ENCODE measurements at regions of chr11 and their contacts with region 1.

Region 1: GRCh38 chr11:72430741-72431570 is 3.4 kb downstream of the CLPB start:
- DNase-seq: peak; percentile 63
- H3K4me3 Mint-ChIP-seq: no peak overlapping the region
- H3K27ac Mint-ChIP-seq: peak overlapping the region; percentile 50
- H3K4me1 Mint-ChIP-seq: peaks cover 60% of the 10 kb centered on the region
- H3K27me3 Mint-ChIP-seq: no peaks in the 10 kb centered on the region

Region 2: DNA sequence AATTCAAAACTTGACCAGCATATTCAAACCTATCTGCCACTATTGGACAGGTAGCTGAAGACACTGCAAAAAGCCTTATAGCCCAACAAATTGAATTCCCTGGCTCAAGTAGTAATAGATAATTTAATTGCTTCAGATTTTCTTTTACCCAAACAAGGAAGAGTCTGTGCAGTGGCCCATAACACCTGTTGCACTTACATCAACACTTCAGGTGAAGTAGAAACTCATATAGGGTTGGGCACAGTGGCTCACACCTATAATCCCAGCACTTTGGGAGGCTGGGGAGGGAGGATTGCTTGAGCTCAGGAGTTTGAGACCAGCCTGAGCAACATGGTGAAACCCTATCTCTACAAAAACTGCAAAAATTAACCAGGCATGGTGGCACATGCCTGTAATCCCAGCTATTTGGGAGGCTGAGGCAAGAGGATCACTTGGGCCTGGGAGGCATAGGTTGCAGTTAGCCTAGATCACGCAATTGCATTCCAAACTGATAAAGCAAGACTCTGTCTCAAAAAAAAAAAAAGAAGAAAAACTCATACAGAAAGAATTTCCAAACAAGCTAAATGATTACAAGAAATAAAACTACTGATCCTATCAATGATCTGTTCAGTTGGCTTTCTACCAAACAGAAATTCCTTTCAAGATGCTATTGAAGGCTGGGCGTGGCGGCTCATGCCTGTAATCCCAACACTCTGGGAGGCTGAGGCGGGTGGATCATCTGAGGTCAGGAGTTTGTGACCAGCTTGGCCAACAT is 286.0 kb before region 1 on chr11:
- CTCF ChIA-PET with region 1: interaction called, 10 read pairs
- DNase-seq: no peak
- H3K4me3 Mint-ChIP-seq: no peak overlapping the region
- H3K27ac Mint-ChIP-seq: no peak overlapping the region
- H3K4me1 Mint-ChIP-seq: no peaks in the 10 kb centered on the region
- H3K27me3 Mint-ChIP-seq: peaks cover 33% of the 10 kb centered on the region

Region 3: GRCh38 chr11:72238040-72238450 is 192.9 kb before region 1 on chr11:
- CTCF ChIA-PET with region 1: interaction called, 18 read pairs
- DNase-seq: peak; percentile 65
- H3K4me3 Mint-ChIP-seq: no peak overlapping the region
- H3K27ac Mint-ChIP-seq: no peak overlapping the region
- H3K4me1 Mint-ChIP-seq: peaks cover 15% of the 10 kb centered on the region
- H3K27me3 Mint-ChIP-seq: peaks cover 51% of the 10 kb centered on the region

Region 4: GRCh38 chr11:72328366-72329224 is 102.4 kb before region 1 on chr11:
- CTCF ChIA-PET with region 1: interaction called, 42 read pairs
- DNase-seq: no peak
- H3K4me3 Mint-ChIP-seq: no peak overlapping the region
- H3K27ac Mint-ChIP-seq: no peak overlapping the region
- H3K4me1 Mint-ChIP-seq: peaks cover 31% of the 10 kb centered on the region
- H3K27me3 Mint-ChIP-seq: no peaks in the 10 kb centered on the region

Region 5: DNA sequence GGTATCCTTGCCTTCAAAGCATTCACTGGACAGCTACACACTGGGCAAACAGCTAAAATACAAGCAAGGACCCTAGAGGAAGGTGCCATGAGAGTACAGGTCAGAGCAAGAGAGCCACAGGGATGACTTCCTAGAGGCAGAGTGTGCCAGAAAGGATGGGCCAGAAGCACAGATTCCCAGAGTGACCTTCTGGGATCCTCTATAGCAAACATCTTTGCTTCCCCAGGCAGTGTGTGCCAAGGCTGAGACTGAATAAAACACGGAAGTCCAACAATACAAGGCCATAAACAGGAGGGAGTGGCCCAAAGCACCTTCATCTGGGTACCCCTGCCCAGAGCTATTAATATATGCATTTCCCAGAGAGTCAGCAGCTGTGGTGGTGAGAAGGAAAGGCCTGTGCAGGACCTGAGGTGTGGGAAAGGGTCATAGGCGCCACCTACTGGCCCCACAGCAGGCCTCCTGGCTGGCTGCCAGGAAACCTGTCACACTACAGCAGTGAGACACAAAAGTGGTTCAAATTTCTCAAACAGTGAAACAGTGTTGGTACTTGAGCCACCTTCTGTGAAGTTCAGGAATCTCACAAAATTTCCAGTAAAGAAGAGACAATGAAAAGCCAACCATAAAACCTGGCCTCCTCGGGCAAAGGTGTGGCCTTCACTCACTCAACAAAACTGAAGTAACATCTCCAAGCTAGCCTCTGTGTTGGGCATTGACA is 16.9 kb before region 1 on chr11:
- CTCF ChIA-PET with region 1: interaction called, 190 read pairs
- DNase-seq: peak; percentile 82
- H3K4me3 Mint-ChIP-seq: no peak overlapping the region
- H3K27ac Mint-ChIP-seq: no peak overlapping the region
- H3K4me1 Mint-ChIP-seq: peaks cover 29% of the 10 kb centered on the region
- H3K27me3 Mint-ChIP-seq: no peaks in the 10 kb centered on the region

Measured in activated naive CD4-positive, alpha-beta T cell treated with anti-CD3 and anti-CD28 coated beads, Interleukin-2, amount 10 ng/mL, durations not matched to agents 7 days and 5 days (primary cell).